Posterior vena cava (tissue), 2 donors: ENCODE measurements at regions of chr9 and their contacts with region 1.

Region 1: GRCh38 chr9:1094749-1095148 is 44.6 kb downstream of the DMRT2 start:
- DNase-seq: no peak

Region 2: GRCh38 chr9:1140057-1140456 is 45.3 kb after region 1 on chr9:
- intact Hi-C with region 1: loop called in 1 of 2 experiments (anchors 1 kb)
- DNase-seq: no peak